Transverse colon (tissue), 4 donors: ENCODE measurements at regions of chr3 and their contacts with region 1.

Region 1: DNA sequence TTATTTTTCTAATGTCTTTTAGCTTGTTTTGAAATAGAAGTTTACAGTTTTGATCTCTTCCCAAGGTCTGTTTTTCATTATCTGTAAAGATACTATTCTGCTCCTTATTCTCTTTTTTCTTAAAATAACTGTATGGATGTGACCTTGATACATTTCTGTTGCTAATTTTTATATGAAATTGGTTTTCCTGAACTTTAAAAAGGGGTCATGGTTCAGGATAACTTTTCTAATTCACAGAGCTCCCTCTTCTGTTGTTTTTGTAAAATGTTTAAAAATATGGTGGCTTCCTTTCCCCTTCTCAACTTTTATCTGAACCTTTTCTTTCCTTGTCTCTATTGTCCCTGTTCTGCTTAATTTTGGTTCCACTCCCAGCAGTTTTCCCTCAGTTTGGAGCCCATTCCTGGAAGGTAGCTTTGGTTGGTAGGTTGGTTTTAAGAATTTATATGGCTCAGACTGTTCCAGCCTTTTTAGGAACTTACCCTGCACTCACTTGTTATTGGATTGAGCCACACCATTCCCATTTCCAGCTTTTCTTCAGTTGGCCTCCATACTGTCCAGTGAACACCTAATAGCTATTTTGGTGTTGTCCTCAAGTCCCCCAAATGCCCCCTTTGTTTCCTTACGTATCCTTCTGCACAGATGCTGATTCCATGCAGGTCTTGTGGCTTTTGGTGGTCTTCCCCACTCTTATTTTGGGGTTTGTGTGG is 70.3 kb downstream of the SLMAP start:
- DNase-seq: no peak
- H3K4me3 ChIP-seq: no peak overlapping the region
- H3K27ac ChIP-seq: no peak overlapping the region
- H3K4me1 ChIP-seq: peaks cover 0 to 46% (median 22%) of the 10 kb centered on the region in 4 donors
- H3K27me3 ChIP-seq: no peaks in the 10 kb centered on the region
- CTCF ChIP-seq: no peak
- EP300 ChIP-seq: no peak
- POLR2A ChIP-seq: no peak

Region 2: DNA sequence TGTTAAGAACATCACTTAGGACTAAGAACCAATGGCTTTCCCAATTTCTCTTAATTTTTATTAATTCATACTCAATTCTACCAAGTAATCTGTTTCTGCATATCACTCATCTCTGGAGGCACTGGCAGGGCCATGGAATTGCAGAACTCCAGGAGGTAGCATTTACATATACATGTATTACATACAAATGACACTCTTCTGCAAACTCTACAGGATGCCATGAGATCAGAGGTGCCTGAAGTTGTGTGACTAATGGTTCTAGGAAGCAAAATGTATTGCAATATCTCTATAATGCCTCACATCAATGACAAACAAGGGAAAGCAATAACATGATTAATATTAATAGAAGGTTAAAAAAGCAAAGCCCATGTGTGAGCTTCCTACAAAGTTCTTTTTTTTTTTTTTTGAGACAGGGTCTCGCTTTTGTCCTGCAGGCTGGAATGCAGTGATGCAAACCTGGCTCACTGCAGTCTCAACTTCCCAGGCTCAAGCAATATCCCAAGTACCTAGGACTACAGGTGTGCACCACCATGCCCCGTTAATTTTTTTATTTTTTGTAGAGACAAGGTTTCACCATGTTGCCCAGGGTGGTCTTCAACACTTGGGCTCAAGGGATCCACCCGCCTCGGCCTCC is 166.5 kb before region 1 on chr3:
- in situ Hi-C with region 1: loop called in 1 of 4 experiments (anchors 25 kb)
- intact Hi-C with region 1: no loop called
- DNase-seq: no peak
- H3K4me3 ChIP-seq: no peak overlapping the region
- H3K27ac ChIP-seq: no peak overlapping the region
- H3K4me1 ChIP-seq: peaks cover 0 to 6% (median 0%) of the 10 kb centered on the region in 4 donors
- H3K27me3 ChIP-seq: no peaks in the 10 kb centered on the region
- CTCF ChIP-seq: no peak
- EP300 ChIP-seq: no peak
- POLR2A ChIP-seq: no peak

Region 3: GRCh38 chr3:58177747-58178527 is 351.5 kb after region 1 on chr3:
- in situ Hi-C with region 1: no loop called
- intact Hi-C with region 1: no loop called
- DNase-seq: peak; percentile 94
- H3K4me3 ChIP-seq: peak overlapping the region; percentile 18 to 38 (median 34)
- H3K27ac ChIP-seq: peak overlapping the region in 3 of 4 donors; percentile 4 to 50 (median 15)
- H3K4me1 ChIP-seq: peaks cover 28 to 62% (median 45%) of the 10 kb centered on the region in 4 donors
- H3K27me3 ChIP-seq: no peaks in the 10 kb centered on the region
- CTCF ChIP-seq: peak; percentile 90 to 97 (median 96)
- EP300 ChIP-seq: no peak
- POLR2A ChIP-seq: no peak

Region 4: DNA sequence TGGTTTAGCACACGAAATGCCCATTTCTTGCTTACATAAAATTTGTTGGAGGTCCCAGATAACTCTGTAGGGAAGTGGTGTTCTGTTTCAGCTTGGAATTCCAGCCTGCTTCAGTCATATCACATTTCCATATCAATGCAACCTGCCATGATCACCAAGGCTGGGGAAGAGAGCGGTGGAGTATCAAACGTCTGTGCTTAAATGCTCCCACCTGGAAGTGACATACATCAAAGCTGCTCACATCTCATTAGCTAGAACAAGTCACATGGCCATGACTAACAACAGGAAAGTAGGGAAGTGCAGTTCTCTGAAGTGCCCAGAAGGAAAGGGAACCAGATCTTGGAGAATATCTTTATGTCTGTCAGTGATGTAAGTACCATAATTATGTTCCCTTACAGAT is 1353.6 kb after region 1 on chr3:
- in situ Hi-C with region 1: no loop called
- intact Hi-C with region 1: no loop called
- DNase-seq: no peak
- H3K4me3 ChIP-seq: no peak overlapping the region
- H3K27ac ChIP-seq: no peak overlapping the region
- H3K4me1 ChIP-seq: no peaks in the 10 kb centered on the region
- H3K27me3 ChIP-seq: no peaks in the 10 kb centered on the region
- CTCF ChIP-seq: no peak
- EP300 ChIP-seq: no peak
- POLR2A ChIP-seq: no peak